ENCODE measurements at regions of chr1 and their contacts with region 1.

Region 1: DNA sequence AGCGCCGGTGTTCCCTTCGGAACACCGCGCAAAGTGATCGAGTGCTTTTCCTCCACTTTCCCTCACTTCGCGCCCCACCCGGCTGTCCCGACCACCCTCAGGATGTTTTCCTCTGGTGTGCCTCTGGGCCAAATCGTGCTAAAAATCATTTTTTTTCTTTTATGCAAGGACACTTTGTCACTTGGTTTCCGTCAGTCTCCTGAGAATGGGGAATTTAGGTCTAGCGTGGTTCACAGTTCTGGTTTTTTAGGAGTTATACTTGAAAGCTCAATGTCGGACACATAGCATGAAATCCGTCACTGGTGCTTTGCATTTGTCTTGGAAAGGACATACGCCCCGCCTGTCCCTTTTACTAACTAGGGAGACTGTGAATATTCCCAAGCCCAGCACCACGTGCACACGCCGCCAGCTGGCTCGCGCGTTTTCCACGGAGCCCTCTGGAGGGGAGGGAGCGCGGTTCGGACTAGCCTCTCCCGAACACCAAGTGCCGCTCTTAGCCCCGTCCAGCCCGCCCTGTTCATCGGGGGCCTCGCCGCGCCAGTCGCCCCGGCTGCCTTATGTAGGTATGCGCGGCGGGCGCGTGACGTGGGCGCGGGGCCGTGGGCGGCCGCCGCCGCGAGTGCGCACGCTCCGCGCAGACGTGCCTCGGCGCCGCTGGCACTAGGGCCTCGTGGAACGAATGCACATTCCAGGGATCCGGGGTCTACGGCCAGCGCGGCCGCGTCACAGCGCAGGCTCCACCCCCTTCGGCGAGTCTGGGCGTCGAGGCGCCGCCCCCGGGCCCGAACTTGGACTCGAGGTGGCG is 572 bp upstream of the IRF2BP2 start:
- DNase-seq: peak; percentile 89 to 94 (median 93)
- H3K4me3 ChIP-seq: peak overlapping the region; percentile 36 to 97 (median 74)
- H3K27ac ChIP-seq: peak overlapping the region; percentile 91 to 94
- H3K4me1 ChIP-seq: peaks cover 33 to 66% (median 56%) of the 10 kb centered on the region in 4 experiments
- H3K27me3 ChIP-seq: no peaks in the 10 kb centered on the region

Region 2: DNA sequence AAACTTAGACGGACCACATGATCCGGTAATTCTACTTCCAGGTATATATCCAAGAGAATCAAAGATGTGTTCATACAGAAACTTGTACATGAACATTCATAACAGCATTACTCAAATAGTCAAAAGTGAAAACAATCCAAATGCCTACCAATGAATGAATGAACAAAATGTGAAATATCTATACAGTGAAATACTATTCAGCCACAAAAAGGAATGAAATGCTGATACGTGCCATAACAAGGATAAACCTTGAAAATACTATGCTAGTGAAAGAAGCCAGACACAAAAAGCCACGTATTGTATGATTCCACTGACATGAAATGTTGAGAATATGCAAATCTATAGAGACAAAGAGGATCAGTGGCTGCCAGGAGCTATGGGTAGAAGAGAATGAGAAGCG is 149.9 kb before region 1 on chr1:
- CTCF ChIA-PET with region 1: no interaction called
- POLR2A ChIA-PET with region 1: no interaction called
- DNase-seq: no peak
- H3K4me3 ChIP-seq: no peak overlapping the region
- H3K27ac ChIP-seq: no peak overlapping the region
- H3K4me1 ChIP-seq: peaks cover 0 to 5% (median 1%) of the 10 kb centered on the region in 4 experiments
- H3K27me3 ChIP-seq: no peaks in the 10 kb centered on the region

Region 3: GRCh38 chr1:234579967-234580366 is 30.6 kb before region 1 on chr1:
- CTCF ChIA-PET with region 1: no interaction called
- POLR2A ChIA-PET with region 1: no interaction called
- DNase-seq: peak; percentile 36 to 69 (median 62)
- H3K4me3 ChIP-seq: no peak overlapping the region
- H3K27ac ChIP-seq: no peak overlapping the region
- H3K4me1 ChIP-seq: peaks cover 0 to 11% (median 0%) of the 10 kb centered on the region in 4 experiments
- H3K27me3 ChIP-seq: no peaks in the 10 kb centered on the region

Region 4: DNA sequence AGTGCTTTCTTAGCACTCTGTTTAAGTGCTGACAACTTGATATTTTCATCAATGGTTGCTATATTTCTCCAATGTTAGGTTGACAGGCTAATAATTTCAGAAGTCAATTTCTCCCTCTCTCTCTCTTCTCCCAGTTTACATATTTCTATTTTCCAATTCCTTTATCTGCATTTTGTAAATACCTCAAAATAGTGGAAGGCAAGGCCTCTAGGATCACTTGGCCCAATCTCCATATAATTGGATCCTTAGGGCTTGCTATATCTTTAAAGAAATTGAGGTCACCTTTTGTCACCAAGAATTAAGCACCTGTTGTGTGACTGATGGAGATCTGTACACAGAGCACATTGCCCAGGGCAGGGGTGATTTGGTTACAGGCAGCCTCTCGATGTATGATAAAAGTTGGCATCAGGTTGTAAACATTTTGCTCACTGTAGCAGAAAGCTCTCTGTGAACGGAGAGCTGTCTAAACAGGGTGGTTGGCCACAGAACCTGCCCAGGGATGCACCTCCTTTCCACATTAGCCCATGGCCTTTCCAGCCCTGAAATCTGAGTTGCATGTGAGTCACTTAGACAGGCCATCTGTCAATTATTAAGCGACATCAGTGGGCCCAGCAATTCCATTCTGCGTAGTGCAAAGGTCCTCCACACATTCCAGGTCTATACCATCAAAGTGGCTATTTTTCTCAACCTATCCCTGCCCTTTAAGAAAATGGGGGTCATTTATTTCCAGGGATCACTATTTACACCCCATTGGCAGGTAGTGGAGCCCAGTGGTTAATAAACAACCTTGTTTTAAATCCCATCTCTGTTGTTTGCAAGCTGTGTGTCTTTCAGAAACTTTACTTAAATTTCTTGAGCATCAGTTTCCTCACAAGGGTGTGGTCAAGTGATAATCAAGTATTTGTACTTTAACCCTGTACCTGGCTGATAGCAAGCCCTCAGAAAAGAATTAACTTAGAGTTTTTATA is 28.6 kb after region 1 on chr1:
- CTCF ChIA-PET with region 1: no interaction called
- POLR2A ChIA-PET with region 1: no interaction called
- DNase-seq: no peak
- H3K4me3 ChIP-seq: no peak overlapping the region
- H3K27ac ChIP-seq: no peak overlapping the region
- H3K4me1 ChIP-seq: no peaks in the 10 kb centered on the region
- H3K27me3 ChIP-seq: no peaks in the 10 kb centered on the region

Region 5: DNA sequence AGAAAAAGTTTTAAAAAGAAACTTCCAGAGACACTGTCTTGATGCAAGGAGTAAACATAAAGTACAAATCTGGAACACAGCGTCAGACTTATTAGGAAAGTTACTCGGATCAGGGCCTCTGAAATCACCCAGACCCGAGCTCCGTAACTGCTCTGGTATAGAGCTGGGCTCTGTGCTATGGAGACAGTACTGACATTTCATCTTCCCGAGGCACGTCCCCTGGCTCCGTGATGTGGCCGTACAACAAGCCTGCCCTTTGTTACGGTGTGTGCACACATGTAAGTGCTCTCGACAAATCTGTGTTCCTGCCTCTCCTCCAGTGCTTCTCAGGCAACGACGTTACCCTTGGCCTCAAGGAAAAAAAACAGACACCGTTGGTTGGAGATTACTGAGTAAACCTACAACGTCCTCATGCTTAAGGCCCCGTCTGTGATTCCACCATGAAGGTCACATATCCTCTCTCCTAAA is 106.4 kb after region 1 on chr1:
- CTCF ChIA-PET with region 1: interaction called, 14 read pairs
- POLR2A ChIA-PET with region 1: interaction called, 117 read pairs
- DNase-seq: no peak
- H3K4me3 ChIP-seq: no peak overlapping the region
- H3K27ac ChIP-seq: no peak overlapping the region
- H3K4me1 ChIP-seq: peaks cover 8 to 51% (median 36%) of the 10 kb centered on the region in 4 experiments
- H3K27me3 ChIP-seq: no peaks in the 10 kb centered on the region

Region 6: DNA sequence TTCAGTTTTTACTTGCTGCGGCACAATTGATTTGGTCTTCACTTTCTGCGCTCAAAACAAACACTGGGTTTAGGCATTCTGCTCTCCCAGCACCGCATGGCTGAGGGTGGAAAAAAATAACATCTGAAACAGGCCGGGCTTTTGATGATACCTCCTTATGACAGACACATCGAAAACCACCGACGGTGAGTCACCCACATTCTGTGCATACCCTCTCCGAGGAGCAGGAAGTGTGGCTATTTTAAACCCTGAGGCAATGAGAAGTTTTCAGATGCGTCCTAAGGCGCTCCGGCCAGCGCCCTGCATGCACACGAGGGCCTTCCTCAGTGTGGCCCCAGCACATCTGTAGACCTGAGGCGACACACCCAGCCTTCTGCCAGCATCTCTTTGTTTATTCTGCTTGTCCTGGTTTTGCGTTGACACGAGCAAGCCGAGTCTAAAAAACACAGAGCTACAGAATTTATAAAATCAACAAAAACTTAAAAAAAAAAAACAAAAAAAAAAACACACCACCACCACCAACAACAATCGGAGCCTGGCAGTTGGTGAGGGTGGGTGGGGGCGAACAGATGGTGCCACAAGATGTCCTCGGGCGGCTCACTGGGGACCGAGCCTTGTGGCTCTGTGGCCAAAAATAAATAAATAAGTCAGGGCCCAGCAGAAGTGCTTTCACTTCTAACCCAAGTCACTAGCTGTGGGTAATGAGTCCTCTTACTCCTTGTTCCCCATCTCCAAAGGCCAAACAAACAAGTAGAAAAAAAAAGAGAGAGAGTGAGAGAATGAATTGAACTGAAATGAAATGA is 162.0 kb after region 1 on chr1:
- CTCF ChIA-PET with region 1: interaction called, 5 read pairs
- POLR2A ChIA-PET with region 1: interaction called, 34 read pairs
- DNase-seq: peak; percentile 96 to 99 (median 99)
- H3K4me3 ChIP-seq: peak overlapping the region in 1 of 7 experiments; percentile 35
- H3K27ac ChIP-seq: peak overlapping the region; percentile 86 to 91
- H3K4me1 ChIP-seq: peaks cover 26 to 70% (median 54%) of the 10 kb centered on the region in 4 experiments
- H3K27me3 ChIP-seq: peaks cover 0 to 2% (median 0%) of the 10 kb centered on the region in 5 experiments

Region 7: DNA sequence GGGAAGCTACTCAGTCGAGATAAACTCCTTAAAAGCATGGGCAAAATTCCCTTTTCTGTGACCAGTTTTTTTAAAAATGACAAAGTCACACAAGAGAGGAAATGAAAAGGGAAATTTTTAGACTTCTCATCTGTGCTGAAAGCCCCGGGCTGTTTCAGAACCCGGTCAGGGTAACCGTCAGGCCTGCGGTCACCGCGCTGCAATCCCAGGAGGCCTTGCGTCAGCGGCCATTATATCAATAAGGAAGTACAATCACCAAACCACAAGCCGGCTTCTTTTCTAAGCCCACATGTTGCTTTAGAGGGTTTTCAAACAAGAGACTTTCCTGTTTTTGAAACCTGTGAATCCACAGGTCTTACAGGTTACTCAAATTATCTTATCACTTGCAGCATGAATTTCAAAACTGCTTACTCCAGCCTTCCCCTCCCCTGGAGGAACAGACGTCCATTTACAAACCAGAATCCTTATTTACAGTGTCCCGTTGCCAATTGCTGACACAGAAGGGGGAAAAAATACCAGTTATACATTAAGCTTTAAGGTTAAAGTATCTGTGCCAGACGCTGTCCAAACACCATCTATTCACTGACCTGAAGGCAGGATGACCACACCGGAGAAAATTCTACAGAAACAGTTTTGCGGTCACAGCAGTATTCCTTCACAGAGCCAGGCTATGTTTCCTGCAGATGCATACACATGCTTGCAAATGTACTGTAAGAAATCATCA is 352.8 kb after region 1 on chr1:
- CTCF ChIA-PET with region 1: interaction called, 5 read pairs
- POLR2A ChIA-PET with region 1: interaction called, 12 read pairs
- DNase-seq: peak; percentile 97 to 99 (median 98)
- H3K4me3 ChIP-seq: peak overlapping the region in 4 of 7 experiments; percentile 13 to 63 (median 56)
- H3K27ac ChIP-seq: peak overlapping the region; percentile 94 to 97
- H3K4me1 ChIP-seq: peaks cover 52 to 79% (median 67%) of the 10 kb centered on the region in 4 experiments
- H3K27me3 ChIP-seq: no peaks in the 10 kb centered on the region

Region 8: GRCh38 chr1:235077571-235078479 is 467.3 kb after region 1 on chr1:
- CTCF ChIA-PET with region 1: interaction called, 21 read pairs
- POLR2A ChIA-PET with region 1: no interaction called
- DNase-seq: peak in 2 of 3 donors; percentile 67 to 80
- H3K4me3 ChIP-seq: no peak overlapping the region
- H3K27ac ChIP-seq: no peak overlapping the region
- H3K4me1 ChIP-seq: peaks cover 8 to 69% (median 60%) of the 10 kb centered on the region in 4 experiments
- H3K27me3 ChIP-seq: no peaks in the 10 kb centered on the region